Sigmoid colon (tissue), 7 donors: ENCODE measurements at regions of chr20 and their contacts with region 1.

Region 1: GRCh38 chr20:45934586-45935415 is at the start of gene PCIF1:
- DNase-seq: peak; percentile 99
- H3K4me3 ChIP-seq: peak within 1 kb of the TSS; percentile 96 to 100 (median 98)
- H3K27ac ChIP-seq: peak within 1 kb of the TSS; percentile 98 to 100 (median 100)
- H3K4me1 ChIP-seq: peaks cover 0 to 35% (median 22%) of the 10 kb centered on the region in 4 donors
- H3K27me3 ChIP-seq: no peaks in the 10 kb centered on the region
- CTCF ChIP-seq: no peak
- EP300 ChIP-seq: no peak
- POLR2A ChIP-seq: peak; percentile 88 to 90
- total RNA-seq, gene PCIF1: 31.4 to 39.3 (median 32.5) TPM

Region 2: DNA sequence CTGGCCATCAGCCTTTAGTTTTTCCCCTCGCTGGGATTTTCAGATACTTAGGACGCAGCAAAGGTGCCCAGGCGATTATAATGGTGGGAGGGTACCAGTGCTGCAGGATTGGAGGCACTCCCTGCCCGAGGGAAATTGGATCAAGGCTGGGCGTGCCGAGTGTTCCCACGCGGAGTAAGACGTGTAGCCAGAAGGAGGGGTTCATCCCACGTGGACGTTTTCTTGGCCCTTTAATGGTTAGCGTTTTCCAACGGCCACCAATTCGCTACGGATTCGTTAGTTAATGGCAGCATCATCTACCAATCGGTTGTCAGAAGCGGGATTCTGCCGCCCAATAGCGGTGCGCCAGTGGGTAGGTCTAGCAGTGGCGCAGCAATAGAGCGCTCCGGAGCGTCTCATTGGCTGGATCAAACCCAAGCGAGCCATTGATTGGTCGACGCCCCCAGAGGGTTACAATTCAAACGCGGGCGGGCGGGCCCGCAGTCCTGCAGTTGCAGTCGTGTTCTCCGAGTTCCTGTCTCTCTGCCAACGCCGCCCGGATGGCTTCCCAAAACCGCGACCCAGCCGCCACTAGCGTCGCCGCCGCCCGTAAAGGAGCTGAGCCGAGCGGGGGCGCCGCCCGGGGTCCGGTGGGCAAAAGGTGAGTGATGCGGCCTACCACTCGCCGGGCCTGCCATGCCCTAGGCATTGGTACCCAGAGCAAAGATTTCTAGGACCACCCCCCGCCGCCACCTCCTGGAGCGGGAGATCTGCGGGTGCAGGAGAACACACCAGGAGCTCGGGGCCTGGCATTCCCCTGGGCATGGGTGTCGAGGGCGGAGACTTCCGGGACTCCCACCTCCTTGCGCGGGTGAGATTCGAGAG is 122.4 kb before region 1 on chr20 and contains the start of gene UBE2C:
- intact Hi-C with region 1: loop called (anchors 10 kb)
- DNase-seq: peak; percentile 99
- H3K4me3 ChIP-seq: peak within 1 kb of the TSS; percentile 23 to 61 (median 52)
- H3K27ac ChIP-seq: peak within 1 kb of the TSS; percentile 53 to 69 (median 64)
- H3K4me1 ChIP-seq: peaks cover 0 to 19% (median 10%) of the 10 kb centered on the region in 4 donors
- H3K27me3 ChIP-seq: no peaks in the 10 kb centered on the region
- CTCF ChIP-seq: no peak
- EP300 ChIP-seq: no peak
- POLR2A ChIP-seq: no peak
- total RNA-seq, gene UBE2C: 3.3 TPM in 1 of 4 donors, not detected in the others

Region 3: DNA sequence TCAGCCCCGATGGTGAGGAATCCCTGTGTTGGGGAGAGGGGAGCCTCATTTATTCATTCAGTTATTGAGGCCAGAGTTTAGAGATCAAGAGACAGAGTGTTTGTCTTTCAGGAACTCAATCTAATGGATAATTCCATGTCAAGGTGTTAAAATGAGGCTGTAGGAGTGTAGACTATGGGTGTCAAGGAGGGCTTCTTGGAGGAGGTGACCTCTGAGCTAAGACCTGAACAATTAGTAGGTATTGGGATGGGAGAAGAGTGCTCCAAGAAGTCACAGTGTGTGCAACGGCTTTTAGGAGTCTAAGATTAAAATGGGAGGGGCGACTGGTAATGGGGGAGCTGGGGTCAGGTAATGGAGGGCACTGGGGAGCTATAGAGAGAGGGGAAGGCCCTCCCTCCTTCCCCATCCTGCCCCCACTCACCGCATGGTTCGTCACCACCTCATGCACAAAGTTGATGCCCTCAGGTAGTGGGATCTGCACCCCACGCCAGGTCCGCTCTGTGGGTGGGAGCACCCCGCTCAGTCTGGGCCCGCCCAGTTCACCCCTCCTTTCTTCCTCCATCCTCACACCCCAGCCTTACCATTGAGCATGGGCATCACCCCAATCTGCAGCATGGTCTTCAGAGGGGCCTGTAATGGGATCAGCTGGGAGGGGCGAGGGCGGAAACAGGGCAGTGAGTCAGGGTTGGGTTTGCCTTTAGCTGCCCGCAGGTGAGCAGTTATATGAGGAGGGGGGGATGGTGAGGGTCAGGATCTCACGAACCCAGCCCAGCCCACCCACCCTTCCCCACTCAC is 35.6 kb before region 1 on chr20:
- intact Hi-C with region 1: no loop called
- DNase-seq: no peak
- H3K4me3 ChIP-seq: no peak overlapping the region
- H3K27ac ChIP-seq: no peak overlapping the region
- H3K4me1 ChIP-seq: no peaks in the 10 kb centered on the region
- H3K27me3 ChIP-seq: no peaks in the 10 kb centered on the region
- CTCF ChIP-seq: no peak
- EP300 ChIP-seq: no peak
- POLR2A ChIP-seq: no peak

Region 4: DNA sequence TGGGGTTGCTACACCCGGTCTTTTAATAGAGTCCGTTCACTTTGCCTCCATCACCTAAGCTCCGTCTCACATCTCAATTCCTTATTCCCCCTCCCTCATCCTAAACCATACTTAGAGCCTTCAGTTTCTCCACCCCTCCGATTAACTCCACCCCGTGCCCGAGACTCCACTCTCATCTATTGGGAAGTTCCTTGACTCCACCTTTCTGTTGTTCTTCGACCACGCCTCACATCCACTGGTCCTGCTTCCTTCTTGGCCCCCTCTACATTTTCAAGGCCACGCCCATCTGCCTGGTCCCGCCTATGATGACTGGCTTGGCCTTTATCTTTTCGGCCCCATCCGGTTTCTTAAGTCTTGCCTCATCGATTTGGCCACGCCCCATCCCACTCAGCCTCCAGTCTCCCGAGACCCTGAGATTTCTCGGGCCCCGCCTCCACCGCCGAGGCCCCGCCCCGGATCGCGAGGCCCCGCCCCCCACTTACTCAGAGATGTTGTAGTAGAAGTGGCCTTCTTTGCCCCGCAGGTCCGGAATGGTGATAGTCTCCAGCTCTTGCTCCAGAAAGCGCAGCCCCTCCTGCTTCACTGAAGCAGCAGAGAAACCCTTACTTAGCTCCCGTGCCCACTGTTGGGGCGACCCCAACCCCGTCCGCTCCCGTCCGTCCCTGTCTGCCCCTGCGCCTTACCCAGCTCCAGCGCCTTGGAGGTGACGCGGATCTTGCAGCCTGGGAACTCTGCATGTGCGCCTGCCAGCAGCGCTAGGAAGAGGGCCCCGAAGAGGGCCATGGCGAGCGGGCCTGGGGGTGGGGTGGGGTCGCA is 23.9 kb before region 1 on chr20:
- intact Hi-C with region 1: loop called (anchors 1 kb)
- DNase-seq: peak; percentile 100
- H3K4me3 ChIP-seq: peak overlapping the region; percentile 45 to 58 (median 50)
- H3K27ac ChIP-seq: peak overlapping the region; percentile 82 to 92 (median 84)
- H3K4me1 ChIP-seq: peaks cover 0 to 20% (median 19%) of the 10 kb centered on the region in 4 donors
- H3K27me3 ChIP-seq: no peaks in the 10 kb centered on the region
- CTCF ChIP-seq: no peak
- EP300 ChIP-seq: no peak
- POLR2A ChIP-seq: peak; percentile 65 to 67

Region 5: DNA sequence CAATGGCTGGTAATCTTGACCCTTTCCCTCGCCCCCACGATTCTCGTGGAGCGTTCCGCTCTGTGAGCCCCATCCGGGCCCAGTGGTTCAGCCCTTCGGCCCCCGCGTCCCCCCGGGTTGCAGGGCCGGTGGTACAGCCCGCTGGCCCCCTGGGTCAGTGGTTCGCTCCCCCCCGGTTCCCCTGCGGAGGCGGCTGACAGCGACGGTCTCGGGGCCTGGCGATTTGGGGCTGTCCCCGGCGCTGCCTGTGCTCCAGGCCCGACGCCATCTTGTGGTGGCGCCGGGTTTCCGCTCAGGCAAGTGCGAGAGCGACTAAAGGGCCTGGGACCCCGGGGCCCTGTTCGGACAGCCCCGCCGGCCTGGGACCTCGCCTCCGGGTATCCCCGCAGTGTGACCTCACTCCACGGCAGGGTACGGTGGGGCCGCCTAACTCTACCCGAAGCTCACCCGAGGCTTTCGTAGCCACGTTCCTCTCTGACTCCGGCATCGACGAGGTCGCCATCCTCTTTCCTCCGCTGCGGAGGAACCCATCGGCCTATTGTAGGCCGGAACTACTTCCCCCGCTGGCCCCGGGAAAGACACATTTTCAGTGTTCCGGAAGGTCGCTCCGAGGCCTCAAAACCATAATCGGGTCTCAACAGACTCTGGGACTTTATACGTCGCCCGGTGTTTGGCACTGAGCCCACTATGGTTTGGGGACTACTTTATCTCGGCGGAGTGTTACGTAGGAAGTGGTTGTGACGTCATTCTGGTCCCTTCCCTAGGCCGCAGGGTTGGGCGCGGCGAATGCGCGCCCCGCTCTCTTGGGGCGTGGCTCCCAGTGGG is 37.1 kb after region 1 on chr20 and contains the start of gene ZNF335:
- intact Hi-C with region 1: loop called (anchors 1 kb)
- DNase-seq: peak; percentile 98
- H3K4me3 ChIP-seq: peak within 1 kb of the TSS; percentile 65 to 92 (median 77)
- H3K27ac ChIP-seq: peak within 1 kb of the TSS; percentile 92 to 99 (median 98)
- H3K4me1 ChIP-seq: peaks cover 0 to 36% (median 25%) of the 10 kb centered on the region in 4 donors
- H3K27me3 ChIP-seq: no peaks in the 10 kb centered on the region
- CTCF ChIP-seq: peak; percentile 18 to 51 (median 38)
- EP300 ChIP-seq: peak in 1 of 4 donors; percentile 61
- POLR2A ChIP-seq: peak; percentile 49 to 62
- total RNA-seq, gene ZNF335: 12.0 to 24.4 (median 14.9) TPM